Heart left ventricle (tissue), 16 donors: ENCODE measurements at regions of chr11 and their contacts with region 1.

Region 1: GRCh38 chr11:56783448-56784041 is 35.0 kb upstream of the OR9G4 start:
- DNase-seq: no peak
- ATAC-seq: no peak
- H3K4me3 ChIP-seq: no peak overlapping the region
- H3K27ac ChIP-seq: no peak overlapping the region
- H3K4me1 ChIP-seq: no peaks in the 10 kb centered on the region
- H3K27me3 ChIP-seq: peaks cover 0 to 7% (median 0%) of the 10 kb centered on the region in 9 donors
- CTCF ChIP-seq: peak; percentile 27 to 65 (median 57)
- POLR2A ChIP-seq: no peak

Region 2: GRCh38 chr11:55942785-55943392 is 840.7 kb before region 1 on chr11:
- intact Hi-C with region 1: loop called in 8 of 10 experiments (anchors 5 to 10 kb)
- DNase-seq: no peak
- ATAC-seq: no peak
- H3K4me3 ChIP-seq: no peak overlapping the region
- H3K27ac ChIP-seq: no peak overlapping the region
- H3K4me1 ChIP-seq: no peaks in the 10 kb centered on the region
- H3K27me3 ChIP-seq: no peaks in the 10 kb centered on the region
- CTCF ChIP-seq: peak in 10 of 12 donors; percentile 14 to 53 (median 34)
- POLR2A ChIP-seq: no peak

Region 3: DNA sequence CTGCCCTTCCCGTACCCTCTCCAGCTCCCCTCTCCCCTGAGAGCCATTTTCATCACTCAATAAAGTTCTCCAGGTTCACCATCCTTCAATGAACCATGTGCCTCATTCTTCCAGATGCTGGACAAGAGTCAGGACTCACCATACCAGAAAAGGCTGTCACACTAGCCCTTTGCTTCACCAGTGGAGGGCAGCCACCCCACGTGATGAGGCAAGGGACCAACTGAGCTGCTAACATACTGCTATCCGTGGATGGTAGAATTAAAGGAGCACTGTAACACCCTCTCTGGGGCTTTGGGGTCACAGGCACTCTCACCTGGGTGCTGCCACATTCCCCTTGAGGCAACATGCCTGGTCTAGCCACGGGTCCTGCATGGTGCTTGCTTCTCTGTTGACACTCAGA is 834.2 kb before region 1 on chr11:
- intact Hi-C with region 1: loop called in 8 of 10 experiments (anchors 5 to 10 kb)
- DNase-seq: no peak
- ATAC-seq: no peak
- H3K4me3 ChIP-seq: no peak overlapping the region
- H3K27ac ChIP-seq: no peak overlapping the region
- H3K4me1 ChIP-seq: no peaks in the 10 kb centered on the region
- H3K27me3 ChIP-seq: no peaks in the 10 kb centered on the region
- CTCF ChIP-seq: no peak
- POLR2A ChIP-seq: no peak

Region 4: DNA sequence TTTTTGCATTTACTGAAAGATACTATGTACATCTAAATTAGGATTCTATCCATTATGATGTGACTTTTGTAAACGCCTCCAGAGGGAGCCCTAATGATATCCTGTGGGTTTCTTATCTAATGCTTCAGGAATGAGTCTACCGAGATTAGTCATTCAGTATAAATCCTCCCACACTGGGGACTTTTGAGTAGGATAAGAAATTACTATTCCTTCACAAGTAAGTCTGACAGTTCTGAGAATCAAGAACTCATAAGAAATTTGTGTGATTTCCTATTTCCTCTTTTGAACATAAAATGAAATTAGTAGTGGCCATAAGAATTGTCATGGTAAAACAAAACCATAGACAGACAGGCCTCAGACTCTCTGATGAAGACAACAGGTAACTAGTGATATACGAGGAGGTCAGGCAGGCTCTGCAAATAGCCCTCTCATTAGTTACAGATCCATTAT is 158.9 kb before region 1 on chr11:
- intact Hi-C with region 1: loop called in 5 of 10 experiments (anchors 5 to 10 kb)
- DNase-seq: no peak
- ATAC-seq: peak in 2 of 4 donors; percentile 48 to 81
- H3K4me3 ChIP-seq: no peak overlapping the region
- H3K27ac ChIP-seq: no peak overlapping the region
- H3K4me1 ChIP-seq: no peaks in the 10 kb centered on the region
- H3K27me3 ChIP-seq: no peaks in the 10 kb centered on the region
- CTCF ChIP-seq: peak in 11 of 12 donors; percentile 7 to 54 (median 35)
- POLR2A ChIP-seq: no peak

Region 5: DNA sequence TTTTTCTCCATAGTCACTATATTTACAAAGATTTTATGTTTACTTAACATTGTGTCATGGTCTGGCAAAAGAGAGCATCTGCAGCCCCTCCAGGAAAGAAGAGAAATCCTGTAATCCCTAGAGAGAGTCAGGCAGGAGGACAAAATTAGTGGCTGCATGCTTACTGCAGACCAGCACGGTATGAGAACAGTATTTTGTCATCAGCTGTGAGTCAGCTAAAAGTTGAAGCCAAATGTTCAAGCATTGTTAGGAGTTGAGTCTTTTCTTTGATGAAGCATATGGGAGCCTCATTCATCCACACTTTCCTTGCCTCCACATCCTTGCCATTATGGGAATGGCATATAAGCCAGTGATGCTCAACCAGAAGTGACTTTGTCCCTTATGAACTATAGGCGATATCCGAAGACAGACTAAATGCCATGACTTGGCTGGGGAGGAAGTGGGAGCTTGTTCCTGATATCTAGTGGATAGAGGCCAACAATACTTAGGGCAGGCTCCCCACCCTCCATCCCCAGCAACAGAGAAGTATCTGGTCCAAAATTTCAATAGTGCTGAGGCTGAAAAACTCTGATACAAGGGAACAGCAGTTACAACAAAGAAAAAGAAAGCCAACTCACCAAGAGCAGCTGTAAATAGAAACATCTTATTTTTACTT is 93.2 kb after region 1 on chr11:
- intact Hi-C with region 1: no loop called
- DNase-seq: no peak
- ATAC-seq: peak in 3 of 4 donors; percentile 42 to 85 (median 66)
- H3K4me3 ChIP-seq: no peak overlapping the region
- H3K27ac ChIP-seq: peak overlapping the region in 6 of 12 donors; percentile 14 to 46 (median 34)
- H3K4me1 ChIP-seq: peaks cover 0 to 8% (median 0%) of the 10 kb centered on the region in 12 donors
- H3K27me3 ChIP-seq: no peaks in the 10 kb centered on the region
- CTCF ChIP-seq: no peak
- POLR2A ChIP-seq: no peak